GM12878 (cell line): ENCODE measurements at regions of chr6 and their contacts with region 1.

Region 1: DNA sequence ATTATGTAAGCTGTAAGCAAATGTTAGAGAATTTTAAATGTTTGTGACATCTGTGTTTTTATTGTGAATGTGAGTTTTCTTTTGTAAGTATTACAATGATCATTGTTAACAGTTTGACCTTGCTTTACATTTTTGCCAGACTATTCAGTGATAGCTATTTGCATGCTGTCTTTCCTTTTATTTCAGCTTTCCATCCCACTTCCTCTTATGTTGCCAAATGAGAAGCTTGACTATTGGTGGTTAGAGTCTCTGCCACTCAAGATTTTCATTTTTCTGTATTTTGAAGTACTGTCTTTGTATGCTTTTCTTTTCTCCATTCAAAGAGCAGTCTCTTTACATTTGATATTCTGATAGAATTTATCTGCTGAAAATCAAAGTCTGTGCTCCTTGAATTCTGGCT is 104.1 kb downstream of the PRIM2 start:
- DNase-seq: peak; percentile 24
- ATAC-seq: peak; percentile 70
- H3K4me3 ChIP-seq: 0 out of 2 replicates have a peak overlapping the region, but pooled peaks have one; percentile 25
- H3K27ac ChIP-seq: no peak overlapping the region
- H3K4me1 ChIP-seq: peaks cover 7% of the 10 kb centered on the region; the same call in 1 of the 2 replicates
- H3K27me3 ChIP-seq: no peaks in the 10 kb centered on the region
- CTCF ChIP-seq: no peak
- EP300 ChIP-seq: peak in 1 of 2 experiments; percentile 57; a peak in 1 of 4 replicates
- POLR2A ChIP-seq: no peak
- RAD21 ChIP-seq: no peak

Region 2: GRCh38 chr6:57177545-57178265 is 243.8 kb before region 1 on chr6:
- CTCF ChIA-PET with region 1: no interaction called
- POLR2A ChIA-PET with region 1: no interaction called
- RAD21 ChIA-PET with region 1: no interaction called
- SMC1A ChIA-PET with region 1: no interaction called
- in situ Hi-C with region 1: no loop called
- intact Hi-C with region 1: no loop called
- DNase-seq: no peak
- ATAC-seq: no peak
- H3K4me3 ChIP-seq: no peak overlapping the region
- H3K27ac ChIP-seq: no peak overlapping the region
- H3K4me1 ChIP-seq: no peaks in the 10 kb centered on the region
- H3K27me3 ChIP-seq: no peaks in the 10 kb centered on the region
- CTCF ChIP-seq: no peak
- EP300 ChIP-seq: no peak
- POLR2A ChIP-seq: no peak
- RAD21 ChIP-seq: no peak

Region 3: GRCh38 chr6:57432919-57433684 is 11.6 kb after region 1 on chr6:
- CTCF ChIA-PET with region 1: interaction called, 8 read pairs
- POLR2A ChIA-PET with region 1: interaction called, 6 read pairs
- RAD21 ChIA-PET with region 1: interaction called, 3 read pairs
- SMC1A ChIA-PET with region 1: interaction called, 10 read pairs
- in situ Hi-C with region 1: no loop called
- intact Hi-C with region 1: no loop called
- DNase-seq: peak; percentile 32
- ATAC-seq: peak; percentile 58
- H3K4me3 ChIP-seq: no peak overlapping the region
- H3K27ac ChIP-seq: peak overlapping the region; percentile 14; the same call in 1 of the 2 replicates
- H3K4me1 ChIP-seq: peaks cover 6% of the 10 kb centered on the region; the same call in 1 of the 2 replicates
- H3K27me3 ChIP-seq: no peaks in the 10 kb centered on the region
- CTCF ChIP-seq: no peak
- EP300 ChIP-seq: no peak
- POLR2A ChIP-seq: no peak
- RAD21 ChIP-seq: no peak